PC-9 (cell line): ENCODE measurements at regions of chr1 and their contacts with region 1.

Region 1: DNA sequence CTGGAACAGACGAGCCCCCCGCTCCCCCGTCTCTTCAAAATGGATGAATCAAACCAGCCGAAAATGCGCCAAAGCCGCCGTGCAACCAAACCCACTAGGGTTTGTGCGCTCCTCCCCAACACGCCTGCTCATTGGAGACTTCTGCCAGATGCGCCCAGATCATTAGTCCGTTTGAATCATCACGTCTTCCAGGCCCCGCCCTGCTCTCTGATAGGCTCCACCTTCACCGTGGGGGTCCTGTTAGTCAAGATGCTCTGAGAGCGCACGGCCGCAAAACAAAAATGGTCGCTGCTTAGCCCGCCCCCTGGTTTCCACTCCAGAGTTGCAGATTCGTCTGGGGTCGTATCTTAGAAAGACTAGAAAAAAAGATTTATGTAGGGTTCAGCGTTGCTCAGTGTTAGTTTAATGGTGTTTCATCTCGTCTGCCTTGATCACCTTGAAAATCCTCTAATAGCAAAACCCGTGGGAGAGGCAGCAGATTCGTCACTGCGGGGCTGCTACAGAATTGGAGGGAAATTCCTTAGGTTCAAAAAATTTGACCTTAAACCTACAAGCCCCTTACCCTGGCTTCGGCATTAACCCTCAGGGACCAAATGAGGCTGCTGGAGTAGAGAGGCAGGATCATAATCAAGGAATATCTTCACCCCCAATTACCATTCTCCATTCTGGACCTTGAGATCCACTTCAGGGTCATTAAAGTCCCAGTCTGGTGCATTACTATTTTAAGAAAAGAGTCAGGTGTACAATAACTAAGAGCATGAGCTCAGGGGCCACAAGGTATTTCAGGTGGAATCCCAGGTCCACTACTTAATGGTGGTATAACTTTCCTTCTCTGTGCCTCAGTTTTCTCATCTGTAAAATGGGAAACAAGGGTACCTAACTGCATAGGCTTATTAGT is at the start of gene NUCKS1:
- DNase-seq: peak; percentile 97
- H3K4me3 ChIP-seq: peak within 1 kb of the TSS; percentile 85
- H3K27ac ChIP-seq: peak within 1 kb of the TSS; percentile 74
- H3K4me1 ChIP-seq: peaks cover 22% of the 10 kb centered on the region
- H3K27me3 ChIP-seq: no peaks in the 10 kb centered on the region
- CTCF ChIP-seq: no peak; the same call in 1 of the 2 replicates
- total RNA-seq, gene NUCKS1: 273 and 319 TPM in 2 replicates

Region 2: DNA sequence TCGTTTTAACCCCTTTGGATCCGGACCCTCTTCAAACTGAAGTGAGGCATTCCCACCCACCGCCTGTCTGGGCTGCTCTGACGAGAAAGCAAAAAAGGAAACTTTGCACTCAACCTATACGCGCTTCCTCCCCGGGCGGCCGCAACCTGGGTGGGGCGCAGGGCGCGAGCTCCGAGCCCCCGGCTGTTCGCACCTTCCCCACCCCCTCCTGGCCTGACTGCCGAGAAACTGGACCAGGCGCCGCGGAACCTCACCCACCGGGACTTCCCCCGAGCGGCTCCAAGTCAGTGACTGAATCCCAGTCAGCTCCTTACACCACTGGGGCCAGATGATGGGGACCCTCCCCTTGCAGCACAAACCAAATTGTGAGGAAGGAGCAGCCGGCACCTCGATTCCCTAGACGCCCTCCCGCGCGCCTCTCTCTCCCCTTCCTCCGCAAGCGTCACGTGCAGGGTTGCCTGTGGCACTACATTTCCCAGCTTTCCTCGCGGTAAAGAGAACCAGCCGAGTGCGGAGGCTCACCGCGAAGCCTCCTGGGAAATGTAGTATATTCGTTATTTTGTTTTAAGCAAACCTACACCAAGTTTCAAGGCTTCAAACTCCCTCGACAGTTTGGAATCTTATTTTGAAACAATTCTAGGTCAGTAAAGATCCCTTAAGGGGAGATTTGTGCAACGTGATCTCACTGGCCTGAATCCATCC is 24.8 kb after region 1 on chr1 and contains the start of gene RAB29:
- CTCF ChIA-PET with region 1: no interaction called
- POLR2A ChIA-PET with region 1: no interaction called
- intact Hi-C with region 1: loop called (anchors 2 kb)
- DNase-seq: peak; percentile 61 to 70
- H3K4me3 ChIP-seq: peak within 1 kb of the TSS; percentile 86
- H3K27ac ChIP-seq: no peak within 1 kb of the TSS
- H3K4me1 ChIP-seq: peaks cover 8% of the 10 kb centered on the region
- H3K27me3 ChIP-seq: no peaks in the 10 kb centered on the region
- CTCF ChIP-seq: no peak
- total RNA-seq, gene RAB29: 10.4 and 11.1 TPM in 2 replicates

Region 3: DNA sequence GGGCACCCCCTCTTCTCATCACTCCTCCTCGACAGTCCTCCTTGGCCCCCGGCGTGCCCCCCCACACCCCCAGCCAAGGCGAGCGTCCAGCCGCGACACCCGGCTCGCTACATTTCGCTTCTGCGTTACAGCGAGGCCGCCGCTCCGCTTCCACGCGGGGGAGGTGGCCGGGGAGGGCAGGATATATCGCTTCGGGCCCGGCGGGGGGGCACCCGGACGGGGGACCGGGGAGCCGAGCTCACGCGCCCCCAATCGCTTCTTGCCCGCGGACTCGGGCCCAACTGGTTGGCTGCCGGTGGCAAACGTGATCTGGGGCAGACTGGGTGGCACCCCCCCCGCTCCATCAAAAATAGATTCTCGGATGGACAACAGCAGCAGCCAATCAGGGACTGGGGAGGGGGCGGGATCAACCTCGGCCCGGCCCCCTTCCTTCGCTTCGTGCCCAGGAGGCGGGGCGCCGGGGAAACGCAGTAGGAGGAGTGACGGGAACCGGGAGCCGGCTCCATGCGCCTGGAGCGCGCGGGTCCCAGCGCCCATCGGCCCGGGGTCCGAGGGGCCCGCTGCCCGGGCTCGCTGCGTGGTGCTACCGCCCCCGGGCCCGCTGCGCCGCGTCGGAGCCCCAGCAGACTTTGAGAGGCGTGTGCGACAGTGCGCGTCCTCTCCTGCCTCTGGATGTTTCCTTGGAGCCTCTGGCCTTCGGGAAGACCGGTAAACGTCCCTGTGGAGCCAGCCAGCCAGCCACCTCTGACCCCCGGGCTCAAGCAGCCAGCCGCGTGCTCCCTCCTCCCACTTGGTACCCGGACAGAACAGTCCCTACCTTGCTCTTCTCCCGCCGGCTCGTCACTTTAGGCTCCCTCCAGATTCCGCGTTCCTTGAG is 62.7 kb after region 1 on chr1 and contains the start of gene SLC41A1:
- CTCF ChIA-PET with region 1: no interaction called
- POLR2A ChIA-PET with region 1: no interaction called
- intact Hi-C with region 1: loop called (anchors 2 kb)
- DNase-seq: peak; percentile 78 to 89
- H3K4me3 ChIP-seq: peak within 1 kb of the TSS; percentile 80
- H3K27ac ChIP-seq: peak within 1 kb of the TSS; percentile 32
- H3K4me1 ChIP-seq: peaks cover 14% of the 10 kb centered on the region
- H3K27me3 ChIP-seq: no peaks in the 10 kb centered on the region
- CTCF ChIP-seq: no peak
- total RNA-seq, gene SLC41A1: 26.5 and 34.5 TPM in 2 replicates

Region 4: DNA sequence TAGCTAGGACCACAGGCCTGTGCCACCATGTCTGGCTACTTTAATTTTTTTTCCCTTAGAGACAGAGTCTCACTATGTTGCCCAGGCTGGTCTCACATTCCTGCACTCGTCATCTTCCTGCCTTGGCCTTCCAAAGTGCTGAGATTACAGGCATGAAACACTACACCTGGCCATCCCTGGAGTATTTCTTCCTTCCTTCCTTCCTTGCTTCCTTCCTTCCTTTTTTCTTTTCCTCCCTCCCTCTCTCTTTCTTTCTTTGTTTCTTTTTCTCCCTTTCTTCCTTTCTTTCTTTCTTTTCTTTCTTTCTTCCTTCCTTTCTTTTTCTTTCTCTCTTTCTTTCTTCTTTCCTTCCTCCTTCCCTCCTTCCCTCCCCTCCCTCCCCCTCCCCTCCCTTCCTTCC is 145.9 kb after region 1 on chr1:
- CTCF ChIA-PET with region 1: no interaction called
- POLR2A ChIA-PET with region 1: interaction called, 14 read pairs
- intact Hi-C with region 1: no loop called
- DNase-seq: no peak
- H3K4me3 ChIP-seq: no peak overlapping the region
- H3K27ac ChIP-seq: no peak overlapping the region
- H3K4me1 ChIP-seq: peaks cover 33% of the 10 kb centered on the region
- H3K27me3 ChIP-seq: no peaks in the 10 kb centered on the region
- CTCF ChIP-seq: no peak